A549 (cell line): ENCODE measurements at regions of chr1 and their contacts with region 1.

Region 1: GRCh38 chr1:94025383-94026340 is 95.3 kb downstream of the ABCA4 start:
- DNase-seq: peak; percentile 60 to 68
- ATAC-seq: peak; percentile 55 to 70; a peak in 3 of 6 replicates
- H3K4me3 ChIP-seq: no peak overlapping the region
- H3K27ac ChIP-seq: peak overlapping the region; percentile 46 to 64; a peak in 5 of 6 replicates
- H3K4me1 ChIP-seq: peaks cover 37% of the 10 kb centered on the region
- CTCF ChIP-seq: peak; percentile 77
- EP300 ChIP-seq: no peak
- POLR2A ChIP-seq: no peak
- RAD21 ChIP-seq: peak; percentile 68 to 78

Region 2: GRCh38 chr1:93552741-93553455 is 472.8 kb before region 1 on chr1:
- CTCF ChIA-PET with region 1: no interaction called
- POLR2A ChIA-PET with region 1: no interaction called
- DNase-seq: no peak
- ATAC-seq: peak; percentile 26 to 27; a peak in 1 of 6 replicates
- H3K4me3 ChIP-seq: no peak overlapping the region
- H3K27ac ChIP-seq: no peak overlapping the region; a peak in 1 of 6 replicates
- H3K4me1 ChIP-seq: peaks cover 36% of the 10 kb centered on the region
- CTCF ChIP-seq: no peak
- EP300 ChIP-seq: no peak
- POLR2A ChIP-seq: no peak
- RAD21 ChIP-seq: no peak

Region 3: GRCh38 chr1:93964777-93965200 is 60.9 kb before region 1 on chr1:
- CTCF ChIA-PET with region 1: interaction called, 12 read pairs
- POLR2A ChIA-PET with region 1: interaction called, 6 read pairs
- DNase-seq: peak; percentile 25 to 91
- ATAC-seq: peak; percentile 77 to 91
- H3K4me3 ChIP-seq: no peak overlapping the region
- H3K27ac ChIP-seq: peak overlapping the region; percentile 89 to 95
- H3K4me1 ChIP-seq: peaks cover 52% of the 10 kb centered on the region
- CTCF ChIP-seq: no peak
- EP300 ChIP-seq: peak in 1 of 2 experiments; percentile 49; a peak in 1 of 5 replicates
- POLR2A ChIP-seq: no peak
- RAD21 ChIP-seq: no peak

Region 4: DNA sequence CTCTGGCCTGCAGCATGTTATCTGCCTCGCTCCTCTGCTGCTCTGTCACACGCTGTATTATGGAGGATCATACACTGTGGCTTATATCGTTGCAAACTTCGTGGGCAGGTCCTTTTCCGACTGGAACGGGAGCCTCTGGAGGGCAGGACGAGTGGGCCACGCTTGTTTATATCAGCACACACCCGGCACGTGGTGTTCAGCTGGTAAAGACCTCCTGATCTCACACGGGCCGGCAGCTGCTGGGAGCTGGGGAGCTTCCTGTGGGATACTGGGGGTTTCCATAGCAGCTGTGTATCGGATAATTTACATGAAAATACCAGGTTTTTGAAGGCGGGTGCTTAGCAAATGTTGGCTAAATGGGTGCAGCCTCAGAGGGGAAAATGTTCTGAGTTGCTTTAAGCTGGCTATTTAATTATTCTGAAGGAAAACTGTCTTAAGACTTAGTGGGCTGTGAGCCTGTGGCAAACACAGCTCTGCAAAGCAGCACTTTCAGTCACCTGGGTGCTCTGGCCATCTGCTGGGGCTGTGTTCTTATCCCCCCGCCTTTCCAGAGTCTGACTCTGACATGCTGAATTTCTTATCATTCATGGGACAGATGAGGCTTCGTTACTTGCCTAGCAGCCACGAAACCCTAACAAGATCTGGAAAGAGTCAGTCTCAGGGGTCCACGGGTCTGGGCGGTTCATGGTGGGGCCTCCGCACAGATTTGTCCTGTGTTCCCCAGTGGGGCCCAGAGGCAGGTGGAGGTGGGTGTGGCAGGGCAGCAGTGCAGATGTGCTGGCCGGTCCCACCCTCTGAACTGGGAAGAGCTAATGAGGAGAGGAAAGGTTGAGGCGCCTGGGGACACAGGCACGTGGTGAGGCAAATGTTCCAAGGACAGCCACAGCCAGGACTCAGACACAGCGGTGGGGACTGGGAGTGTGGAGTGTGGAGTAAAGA is 12.7 kb before region 1 on chr1:
- CTCF ChIA-PET with region 1: interaction called, 40 read pairs
- POLR2A ChIA-PET with region 1: no interaction called
- DNase-seq: no peak
- ATAC-seq: no peak
- H3K4me3 ChIP-seq: no peak overlapping the region
- H3K27ac ChIP-seq: no peak overlapping the region
- H3K4me1 ChIP-seq: no peaks in the 10 kb centered on the region
- CTCF ChIP-seq: no peak
- EP300 ChIP-seq: no peak
- POLR2A ChIP-seq: no peak
- RAD21 ChIP-seq: no peak

Region 5: GRCh38 chr1:94061513-94062443 is 36.1 kb after region 1 on chr1:
- CTCF ChIA-PET with region 1: interaction called, 22 read pairs
- POLR2A ChIA-PET with region 1: no interaction called
- DNase-seq: peak; percentile 67 to 87
- ATAC-seq: peak; percentile 93 to 97
- H3K4me3 ChIP-seq: no peak overlapping the region
- H3K27ac ChIP-seq: peak overlapping the region; percentile 72 to 78
- H3K4me1 ChIP-seq: peaks cover 21% of the 10 kb centered on the region
- CTCF ChIP-seq: peak; percentile 76
- EP300 ChIP-seq: no peak
- POLR2A ChIP-seq: no peak
- RAD21 ChIP-seq: peak; percentile 91 to 93

Region 6: DNA sequence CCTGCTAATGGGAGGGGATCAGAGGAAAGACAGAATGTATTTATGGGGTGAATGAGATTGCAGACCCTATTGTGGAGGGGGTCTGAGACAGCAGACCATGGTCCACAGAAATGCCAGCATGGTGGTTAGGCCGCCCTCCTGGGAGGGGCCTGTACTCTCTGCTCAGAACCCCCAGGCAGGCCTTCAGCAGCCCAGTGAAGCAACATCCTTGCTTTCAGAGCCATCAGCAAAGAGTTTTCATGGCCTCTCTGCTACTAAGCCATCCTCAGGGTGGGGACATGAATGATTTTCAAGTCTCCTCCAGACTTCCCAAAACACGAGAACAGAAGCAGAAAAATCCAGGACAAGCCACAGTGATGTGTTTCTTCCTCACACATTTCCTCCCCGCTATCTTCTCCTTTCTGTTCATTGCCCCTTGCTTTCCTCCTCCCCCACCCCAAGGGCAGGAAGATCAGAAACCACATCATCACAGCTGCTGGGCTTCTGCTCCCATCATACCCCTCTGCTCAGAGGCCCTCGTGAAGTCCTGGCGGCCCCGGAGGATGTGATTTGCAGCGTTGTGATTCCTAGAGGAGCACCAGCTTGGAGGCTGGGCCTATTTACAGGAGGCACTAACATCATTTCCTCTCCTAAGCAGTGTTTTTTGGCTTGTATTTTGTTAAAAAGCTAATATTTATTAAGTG is 47.3 kb after region 1 on chr1:
- CTCF ChIA-PET with region 1: no interaction called
- POLR2A ChIA-PET with region 1: no interaction called
- DNase-seq: no peak
- ATAC-seq: no peak
- H3K4me3 ChIP-seq: no peak overlapping the region
- H3K27ac ChIP-seq: peak overlapping the region in 1 of 2 experiments; percentile 49; a peak in 3 of 6 replicates
- H3K4me1 ChIP-seq: peaks cover 26% of the 10 kb centered on the region
- CTCF ChIP-seq: no peak
- EP300 ChIP-seq: no peak
- POLR2A ChIP-seq: no peak
- RAD21 ChIP-seq: no peak

Region 7: DNA sequence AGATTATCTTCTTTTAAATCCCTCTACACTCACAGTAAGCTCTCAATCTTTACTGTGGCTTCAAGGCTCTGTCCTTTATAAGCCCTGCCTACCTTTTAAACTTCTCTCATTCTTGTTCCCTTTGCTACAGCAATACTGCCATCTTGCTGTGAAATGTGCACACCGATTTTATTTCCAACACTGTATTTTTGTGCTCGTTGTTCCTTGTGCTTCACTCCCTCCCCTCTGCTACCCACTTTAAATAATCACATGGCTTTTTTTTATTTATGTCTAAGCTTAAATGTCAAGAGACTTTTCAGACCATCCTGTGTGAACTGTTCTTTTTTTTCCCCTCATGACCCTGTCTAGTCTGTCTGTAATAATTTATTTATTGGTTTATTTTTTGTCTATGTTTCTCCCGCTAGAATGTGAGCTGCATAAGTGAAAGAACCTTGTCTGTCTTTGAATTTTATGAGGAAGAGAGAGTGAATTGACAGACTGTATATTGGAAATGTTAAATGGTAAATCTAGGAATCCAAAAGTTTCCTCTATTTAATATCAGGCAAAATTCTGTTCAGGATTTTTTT is 438.2 kb after region 1 on chr1:
- CTCF ChIA-PET with region 1: interaction called, 21 read pairs
- POLR2A ChIA-PET with region 1: no interaction called
- DNase-seq: peak; percentile 14 to 66
- ATAC-seq: peak; percentile 89 to 92
- H3K4me3 ChIP-seq: no peak overlapping the region
- H3K27ac ChIP-seq: peak overlapping the region in 1 of 2 experiments; percentile 40; a peak in 1 of 6 replicates
- H3K4me1 ChIP-seq: peaks cover 10% of the 10 kb centered on the region
- CTCF ChIP-seq: peak; percentile 81
- EP300 ChIP-seq: no peak
- POLR2A ChIP-seq: no peak
- RAD21 ChIP-seq: peak; percentile 86 to 92